ENCODE measurements at regions of chr20 and their contacts with region 1.

Region 1: DNA sequence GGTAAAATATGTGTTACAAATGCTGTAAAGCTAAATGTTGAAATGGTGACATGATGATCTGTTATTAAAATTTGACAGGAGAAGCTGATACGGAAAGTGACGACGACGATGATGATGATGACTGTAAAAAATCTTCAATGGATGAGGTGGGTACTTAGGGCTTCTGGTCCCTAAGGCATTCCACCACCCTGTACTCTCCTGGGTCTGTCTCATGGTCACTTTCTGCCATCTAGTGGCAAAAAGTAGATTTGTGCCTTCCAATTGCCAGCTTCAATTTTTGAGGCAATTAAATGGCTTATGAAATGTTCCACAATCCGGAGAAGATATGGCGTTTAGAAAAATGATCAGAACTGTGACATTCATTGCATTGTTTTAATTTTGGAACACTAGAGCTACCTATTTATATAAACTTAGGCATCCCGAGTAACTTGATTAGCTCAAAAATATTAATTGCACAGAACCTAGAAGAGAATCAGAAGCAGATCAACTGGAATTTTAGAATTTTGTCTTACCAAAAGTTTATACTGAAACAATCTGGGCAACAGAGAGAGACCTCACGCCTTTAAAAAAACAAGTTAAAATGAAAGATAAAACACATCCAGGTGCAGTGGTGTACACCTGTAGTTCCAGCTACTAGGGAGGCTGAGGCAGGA is 346.5 kb upstream of the PLCB4 start:
- DNase-seq: peak in 3 of 10 donors; percentile 14 to 42 (median 29)

Region 2: DNA sequence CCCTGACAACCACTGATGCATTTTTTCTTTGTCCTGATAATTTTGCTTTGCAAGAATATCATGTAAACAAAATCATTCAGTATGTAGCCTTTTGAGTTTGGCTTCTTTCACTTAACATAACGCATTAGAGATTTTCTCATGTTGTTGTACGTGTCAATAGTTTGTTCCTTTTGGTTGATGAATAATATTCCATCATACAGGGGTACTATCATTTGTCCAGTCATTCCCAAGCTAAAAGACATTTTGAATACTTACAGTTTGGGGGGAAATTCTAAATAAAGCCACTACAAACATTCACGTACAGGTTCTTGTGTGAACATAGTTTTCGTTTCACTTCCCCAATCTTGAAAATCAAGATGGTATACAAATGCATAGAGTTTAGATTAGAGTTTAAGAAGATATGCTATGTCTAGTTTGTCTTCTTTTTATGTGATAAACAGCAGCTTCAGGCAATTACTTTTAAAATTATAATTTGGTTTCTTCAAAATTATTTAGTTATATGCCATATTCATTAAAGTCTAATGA is 787.3 kb before region 1 on chr20:
- intact Hi-C with region 1: loop called (anchors 5 kb)
- DNase-seq: no peak

Region 3: DNA sequence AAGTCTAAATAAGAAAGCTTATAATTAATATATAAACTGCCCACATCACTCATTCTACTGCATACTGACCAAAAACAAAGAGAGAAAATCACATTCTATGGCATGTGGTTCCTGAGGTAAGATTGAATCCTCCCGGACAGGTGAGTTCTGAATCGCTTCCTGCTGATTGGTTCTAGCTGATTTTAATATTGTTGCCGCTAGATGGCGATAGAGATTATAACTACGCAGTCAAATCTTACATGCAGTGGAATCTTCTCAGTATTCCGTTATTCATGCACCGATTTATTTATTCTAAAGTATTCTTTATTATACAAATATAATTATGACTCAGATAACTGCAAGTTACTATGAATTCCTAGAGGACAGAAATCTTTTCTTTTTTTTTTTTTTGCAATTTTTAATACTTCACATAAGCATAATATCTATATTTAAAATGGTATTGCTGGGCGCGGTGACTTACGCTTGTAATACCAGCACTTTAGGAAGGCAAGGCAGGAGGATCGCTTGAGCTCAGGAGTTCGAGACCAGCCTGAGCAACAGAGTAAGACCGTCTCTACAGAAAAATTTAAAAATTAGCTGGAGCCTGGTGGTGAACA is 678.6 kb before region 1 on chr20:
- intact Hi-C with region 1: loop called (anchors 2 kb)
- DNase-seq: no peak

Region 4: DNA sequence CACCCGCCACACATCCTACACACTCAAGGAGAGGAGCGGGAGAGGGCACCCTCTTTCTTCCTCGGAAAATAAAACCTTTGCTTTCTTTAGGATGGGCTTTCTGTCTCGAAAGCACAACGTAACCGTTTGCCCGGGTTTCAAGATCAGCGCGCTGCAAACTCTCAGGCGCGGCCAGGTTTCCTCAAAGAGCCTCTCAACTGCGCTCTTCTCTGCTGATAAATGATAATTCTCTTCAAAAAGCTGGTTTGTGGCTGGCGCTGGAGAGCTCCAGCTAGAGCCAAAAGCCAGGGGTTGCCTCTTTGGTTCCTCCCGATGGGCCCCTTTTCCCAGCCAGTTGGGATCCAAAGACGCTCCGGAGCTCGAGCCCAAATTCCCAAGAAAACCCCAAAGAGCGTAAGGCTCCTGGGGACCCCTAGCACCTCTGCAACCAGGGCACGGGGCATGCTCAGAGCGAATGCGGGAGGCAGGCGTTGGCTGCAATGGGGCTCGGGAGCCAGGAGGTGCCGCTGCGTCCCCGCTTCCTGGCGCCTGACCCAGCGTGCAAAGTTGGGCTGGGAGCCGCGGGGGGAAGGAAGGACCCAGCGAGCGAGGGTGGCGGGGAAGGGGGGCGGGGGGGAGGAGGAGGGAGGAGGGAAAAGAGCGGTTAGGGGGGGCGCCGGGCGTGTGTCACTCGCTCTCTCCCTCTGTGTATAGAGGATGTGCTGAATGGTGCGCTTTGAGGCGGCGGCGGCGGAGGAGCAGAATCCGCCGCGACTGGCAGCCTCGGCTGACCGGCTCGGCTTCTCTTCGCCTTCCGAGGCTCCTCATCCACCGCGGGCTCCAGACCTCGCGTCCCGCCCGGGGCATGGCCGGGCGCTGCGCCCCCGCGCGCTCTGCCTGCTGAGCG is 590.6 kb before region 1 on chr20 and contains the start of gene PLCB1:
- intact Hi-C with region 1: loop called (anchors 5 kb)
- DNase-seq: peak; percentile 75 to 97 (median 84)

Region 5: GRCh38 chr20:8389381-8390036 is 332.9 kb before region 1 on chr20:
- intact Hi-C with region 1: loop called (anchors 5 kb)
- DNase-seq: no peak

Region 6: DNA sequence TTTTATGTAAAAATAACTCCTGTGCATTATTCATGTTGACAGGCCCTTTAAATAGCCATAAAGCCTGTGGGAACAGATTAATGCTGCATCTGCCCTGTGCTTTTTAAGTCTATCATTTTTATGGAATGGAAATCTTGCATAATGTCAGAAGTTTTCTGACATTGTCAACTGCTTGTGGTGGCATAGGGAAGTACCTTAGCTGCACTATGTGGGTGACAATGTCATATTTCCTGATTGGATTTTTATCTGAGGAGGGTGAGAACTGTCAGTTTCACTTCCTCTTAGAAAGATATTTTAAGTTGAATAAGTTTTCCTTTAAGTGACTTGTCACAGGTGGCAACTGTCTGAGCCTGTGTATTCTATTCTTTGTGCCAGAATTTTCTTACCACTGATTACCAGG is 322.5 kb before region 1 on chr20:
- intact Hi-C with region 1: no loop called
- DNase-seq: no peak